Lower leg skin (tissue), 4 donors: ENCODE measurements at regions of chr14 and their contacts with region 1.

Region 1: GRCh38 chr14:104137297-104138097 is 890 bp upstream of the KIF26A start:
- DNase-seq: peak in 1 of 2 donors; percentile 91
- H3K4me3 ChIP-seq: peak overlapping the region; percentile 28
- CTCF ChIP-seq: peak in 1 of 3 donors; percentile 40
- POLR2A ChIP-seq: no peak

Region 2: DNA sequence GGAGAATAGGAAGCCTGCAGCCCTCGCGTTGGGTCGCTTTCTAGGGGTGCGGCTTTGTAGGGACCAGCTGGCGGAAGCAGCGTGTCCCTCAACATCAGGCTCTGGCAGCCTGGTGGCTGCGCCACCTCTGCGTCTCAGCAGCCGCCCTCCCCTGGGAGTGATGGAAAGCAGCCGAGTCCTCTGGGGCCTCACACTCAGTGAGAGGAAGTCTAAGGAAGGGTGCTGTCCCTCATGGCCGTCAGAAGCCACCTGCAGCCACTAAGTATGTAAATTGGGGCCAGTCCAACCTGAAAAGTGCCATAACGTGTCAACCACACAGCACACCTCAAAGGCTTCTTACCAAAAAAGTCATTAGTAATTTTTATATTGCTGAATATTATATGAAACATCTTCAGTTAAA is 1917.5 kb before region 1 on chr14:
- intact Hi-C with region 1: loop called (anchors 5 kb)
- DNase-seq: no peak
- H3K4me3 ChIP-seq: no peak overlapping the region
- CTCF ChIP-seq: no peak
- POLR2A ChIP-seq: no peak

Region 3: GRCh38 chr14:104322531-104323366 is 185.3 kb after region 1 on chr14:
- intact Hi-C with region 1: loop called (anchors 5 kb)
- DNase-seq: no peak
- H3K4me3 ChIP-seq: no peak overlapping the region
- CTCF ChIP-seq: no peak
- POLR2A ChIP-seq: no peak

Region 4: DNA sequence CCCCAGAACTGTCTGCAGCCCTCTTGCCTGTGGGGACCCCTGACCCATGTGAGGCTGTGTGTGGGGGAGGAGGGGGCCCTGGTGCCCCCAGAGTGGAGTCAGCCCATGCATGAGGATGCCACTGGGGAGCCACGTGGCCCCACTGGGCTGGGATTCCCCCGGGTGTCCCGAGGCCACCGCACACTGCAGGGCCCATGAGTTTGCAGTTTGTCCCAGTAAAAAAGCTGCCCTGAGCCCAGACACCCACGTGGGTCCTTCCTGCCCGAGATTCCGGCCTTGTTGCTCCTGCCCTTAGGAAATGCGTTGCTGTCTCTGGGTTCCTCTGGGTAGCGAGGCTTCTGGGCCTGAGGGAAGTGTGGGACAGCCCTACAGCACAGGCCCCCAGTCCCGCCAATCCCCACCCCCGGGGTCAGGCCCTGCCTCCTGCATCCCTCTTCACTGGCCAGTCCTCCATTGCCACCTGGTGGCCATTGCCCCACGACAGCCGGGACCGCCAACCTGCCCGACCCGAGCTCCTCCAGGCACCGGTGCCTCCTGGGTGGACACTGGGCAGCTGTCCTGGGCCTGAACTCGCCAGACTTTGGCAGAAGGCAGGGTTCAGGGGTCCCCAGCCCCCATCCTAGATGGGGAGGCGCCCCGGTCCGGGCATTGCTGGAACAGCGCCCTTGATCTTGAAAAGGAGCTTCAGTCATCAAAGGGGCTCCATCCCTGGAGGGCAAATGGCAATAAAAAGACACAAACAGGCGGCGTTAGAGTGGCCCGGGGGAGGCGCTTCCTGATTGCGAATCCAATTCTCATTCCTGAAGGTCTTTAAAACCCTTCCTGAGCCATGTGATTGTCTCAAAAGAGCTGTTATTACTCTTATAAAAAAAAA is 426.5 kb after region 1 on chr14:
- intact Hi-C with region 1: loop called (anchors 5 kb)
- DNase-seq: peak; percentile 43 to 92
- H3K4me3 ChIP-seq: no peak overlapping the region
- CTCF ChIP-seq: peak in 1 of 3 donors; percentile 39
- POLR2A ChIP-seq: no peak

Region 5: DNA sequence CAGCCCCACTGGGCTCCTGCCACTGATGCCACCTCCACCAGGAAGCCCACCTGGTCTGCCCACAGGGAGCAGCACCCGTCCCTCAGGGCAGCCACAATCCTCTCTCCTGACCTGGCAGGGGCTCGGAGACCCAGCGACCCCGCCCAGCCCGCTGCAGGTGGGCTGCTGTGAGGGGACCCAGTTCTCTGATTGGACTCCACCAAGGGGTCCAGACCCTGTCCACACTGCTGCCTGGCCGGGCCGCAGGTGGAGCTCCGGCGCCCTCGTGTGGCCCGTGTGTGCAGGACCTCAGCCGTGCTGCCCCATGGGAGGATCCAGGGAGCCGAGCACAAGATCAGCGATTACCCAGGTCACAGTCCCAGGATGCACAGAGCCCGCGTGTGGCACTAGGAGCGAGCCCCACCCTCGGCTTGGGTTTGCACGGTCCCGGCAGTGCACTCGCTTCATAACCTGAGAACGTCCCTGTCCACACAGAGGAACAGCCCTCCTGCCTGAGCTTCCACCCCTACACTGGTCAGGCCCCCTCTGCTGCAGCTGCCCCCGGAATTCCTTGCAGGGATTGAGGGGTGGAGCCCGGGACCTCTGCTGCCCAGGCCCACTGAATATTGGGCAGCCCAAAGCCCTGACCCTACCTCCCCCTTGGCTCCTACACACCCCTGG is 502.5 kb after region 1 on chr14:
- intact Hi-C with region 1: loop called (anchors 10 kb)
- DNase-seq: peak in 1 of 2 donors; percentile 40
- H3K4me3 ChIP-seq: no peak overlapping the region
- CTCF ChIP-seq: no peak
- POLR2A ChIP-seq: no peak